Transverse colon (tissue), 4 donors: ENCODE measurements at regions of chr22 and their contacts with region 1.

Region 1: DNA sequence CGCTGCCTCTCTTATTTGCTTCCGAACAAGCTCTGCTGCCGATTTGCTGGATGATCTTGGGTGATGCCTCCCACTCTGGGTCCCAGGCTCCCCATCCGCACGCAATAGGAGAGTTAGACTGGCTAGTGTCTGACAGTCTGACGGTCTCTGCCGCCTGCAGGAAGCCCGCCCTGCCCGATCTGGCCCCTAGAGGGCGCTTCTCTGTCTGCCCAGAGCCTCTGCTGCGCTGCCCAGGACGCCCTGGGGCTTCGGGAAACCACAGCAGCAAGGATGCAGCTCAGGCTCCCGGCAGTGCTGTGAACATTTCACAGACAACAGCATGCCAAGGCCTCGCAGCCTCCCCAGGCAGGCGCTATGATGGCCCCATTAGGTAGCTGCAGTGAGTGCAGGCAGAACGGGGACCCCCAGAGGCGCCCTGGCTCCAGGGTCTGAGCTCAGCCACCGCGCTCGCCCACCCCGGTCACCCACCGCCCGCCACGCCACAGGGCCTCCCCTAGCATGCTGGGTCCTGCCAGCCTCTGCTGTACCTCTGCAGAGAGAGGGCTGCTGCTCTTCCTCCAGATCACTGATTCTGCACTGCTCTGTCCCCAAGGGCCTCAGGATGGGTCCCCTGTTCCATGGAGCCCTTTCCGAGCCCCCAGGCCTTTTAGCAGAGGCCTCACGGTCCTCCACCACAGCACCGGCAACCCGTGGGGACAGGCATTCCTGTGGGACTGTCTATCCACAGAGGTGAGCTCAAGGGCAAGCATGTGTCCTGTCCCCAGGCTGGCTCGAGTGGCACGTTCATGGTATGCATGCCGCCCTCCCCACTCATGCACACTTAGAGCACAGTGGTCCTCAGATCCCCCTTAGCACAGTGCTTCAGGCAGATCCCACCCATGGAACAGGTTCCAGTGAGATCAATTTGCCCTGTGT is 4.3 kb upstream of the BAIAP2L2 start:
- DNase-seq: peak; percentile 90
- H3K4me3 ChIP-seq: no peak overlapping the region
- H3K27ac ChIP-seq: no peak overlapping the region
- H3K4me1 ChIP-seq: peaks cover 4 to 30% (median 21%) of the 10 kb centered on the region in 4 donors
- H3K27me3 ChIP-seq: no peaks in the 10 kb centered on the region
- CTCF ChIP-seq: peak; percentile 86 to 95 (median 93)
- EP300 ChIP-seq: no peak
- POLR2A ChIP-seq: no peak

Region 2: DNA sequence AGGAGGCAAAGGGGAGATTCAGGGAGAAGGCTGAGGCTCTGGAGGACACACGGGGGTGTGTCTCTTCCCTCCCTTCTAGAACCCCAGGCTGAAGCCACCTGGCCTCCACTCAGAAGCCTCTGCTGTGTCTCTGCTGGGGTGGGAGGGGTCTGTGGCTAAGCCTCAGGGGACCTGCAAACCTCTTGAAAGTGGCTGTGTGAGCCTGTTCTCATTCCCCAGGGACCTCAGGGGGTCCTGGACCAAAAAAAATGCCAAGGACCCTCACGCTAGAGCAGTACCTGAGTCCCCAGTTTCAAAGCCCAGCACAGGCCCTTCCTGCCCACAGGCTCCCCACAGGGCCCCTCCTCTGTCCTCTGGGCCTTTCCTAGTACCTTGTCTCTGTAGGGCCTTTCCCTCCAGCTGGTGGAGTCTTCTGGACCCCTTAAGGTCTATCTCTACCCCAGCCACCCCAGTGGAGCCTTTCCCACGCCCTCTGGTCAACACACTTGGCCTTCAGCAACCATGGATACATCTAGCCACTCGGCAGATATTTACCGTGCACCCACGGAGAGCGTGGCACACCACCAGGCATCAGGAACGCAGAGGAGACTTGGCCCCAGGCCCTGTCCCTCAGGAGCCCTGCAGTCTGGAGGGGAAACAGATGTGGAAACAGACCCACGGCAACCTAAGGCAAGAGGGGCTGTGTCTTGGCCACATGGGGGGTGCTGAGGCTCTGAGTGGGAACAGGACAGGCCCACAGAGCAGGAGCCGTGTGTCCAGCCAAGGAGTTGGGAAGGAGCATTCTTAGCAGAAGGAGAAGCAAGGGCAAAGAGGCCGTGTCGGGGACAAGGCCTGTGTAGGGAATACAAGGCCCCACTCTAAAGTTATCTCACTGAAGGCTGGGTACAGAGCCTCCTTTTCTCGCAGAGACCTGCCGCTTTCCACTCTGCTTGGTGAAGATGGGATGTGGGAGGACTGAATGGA is 48.4 kb after region 1 on chr22:
- in situ Hi-C with region 1: no loop called
- intact Hi-C with region 1: no loop called
- DNase-seq: no peak
- H3K4me3 ChIP-seq: no peak overlapping the region
- H3K27ac ChIP-seq: no peak overlapping the region
- H3K4me1 ChIP-seq: peaks cover 0 to 8% (median 1%) of the 10 kb centered on the region in 4 donors
- H3K27me3 ChIP-seq: no peaks in the 10 kb centered on the region
- CTCF ChIP-seq: no peak
- EP300 ChIP-seq: no peak
- POLR2A ChIP-seq: no peak

Region 3: GRCh38 chr22:38230108-38230825 is 115.5 kb after region 1 on chr22:
- in situ Hi-C with region 1: loop called in 1 of 4 experiments (anchors 25 kb)
- intact Hi-C with region 1: loop called (anchors 10 kb)
- DNase-seq: peak; percentile 80
- H3K4me3 ChIP-seq: no peak overlapping the region
- H3K27ac ChIP-seq: peak overlapping the region; percentile 37 to 77 (median 70)
- H3K4me1 ChIP-seq: peaks cover 14 to 28% (median 25%) of the 10 kb centered on the region in 4 donors
- H3K27me3 ChIP-seq: no peaks in the 10 kb centered on the region
- CTCF ChIP-seq: peak; percentile 34 to 83 (median 50)
- EP300 ChIP-seq: no peak
- POLR2A ChIP-seq: no peak

Region 4: DNA sequence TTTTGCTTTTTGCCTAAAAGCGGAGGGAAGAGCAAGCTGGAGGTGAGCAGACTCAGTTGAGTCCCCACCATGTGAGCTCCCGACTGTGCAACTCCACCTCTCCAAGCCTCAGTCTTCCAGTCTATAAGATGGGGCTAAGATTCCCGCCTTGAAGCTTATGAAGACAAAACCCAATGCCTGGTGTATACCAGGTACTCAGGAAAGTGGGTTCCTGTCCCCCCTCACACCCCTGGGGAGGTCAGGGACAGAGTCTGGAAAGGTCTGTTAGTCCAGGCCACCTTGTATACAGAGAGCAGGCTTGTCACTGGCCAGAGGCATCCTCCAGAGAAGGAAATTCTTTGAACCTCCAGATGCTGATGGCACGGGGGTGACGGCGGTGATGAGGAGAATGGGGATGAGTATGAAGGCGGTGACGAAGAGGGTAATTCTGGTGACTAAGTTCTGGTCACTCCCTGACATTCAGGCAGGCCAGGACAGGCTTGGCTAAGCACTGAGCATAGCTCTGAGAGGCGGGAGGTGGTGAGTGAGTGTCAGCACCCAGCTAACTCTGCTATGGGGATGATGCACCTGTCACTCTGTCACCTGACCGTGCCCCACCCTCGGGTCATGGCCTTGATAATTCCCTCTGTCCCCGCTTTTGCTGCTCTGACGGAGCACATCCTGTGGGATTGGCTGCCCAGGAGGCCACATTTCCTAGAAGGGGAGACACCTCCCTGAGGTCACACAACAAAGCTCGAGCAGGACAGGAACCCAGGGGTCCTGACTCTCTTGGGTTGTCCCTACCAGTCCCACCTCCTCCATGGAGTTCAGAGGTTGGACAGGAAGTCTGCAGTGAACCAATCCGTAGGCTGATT is 233.4 kb after region 1 on chr22:
- in situ Hi-C with region 1: loop called in 3 of 4 experiments (anchors 25 kb)
- intact Hi-C with region 1: loop called (anchors 5 kb)
- DNase-seq: peak; percentile 32
- H3K4me3 ChIP-seq: no peak overlapping the region
- H3K27ac ChIP-seq: no peak overlapping the region
- H3K4me1 ChIP-seq: peaks cover 0 to 4% (median 2%) of the 10 kb centered on the region in 4 donors
- H3K27me3 ChIP-seq: peaks cover 7% of the 10 kb centered on the region
- CTCF ChIP-seq: no peak
- EP300 ChIP-seq: no peak
- POLR2A ChIP-seq: no peak

Region 5: GRCh38 chr22:38353142-38353629 is 238.4 kb after region 1 on chr22:
- in situ Hi-C with region 1: loop called in 3 of 4 experiments (anchors 25 kb)
- intact Hi-C with region 1: loop called (anchors 5 kb)
- DNase-seq: peak; percentile 77
- H3K4me3 ChIP-seq: no peak overlapping the region
- H3K27ac ChIP-seq: no peak overlapping the region
- H3K4me1 ChIP-seq: peaks cover 0 to 8% (median 5%) of the 10 kb centered on the region in 4 donors
- H3K27me3 ChIP-seq: no peaks in the 10 kb centered on the region
- CTCF ChIP-seq: peak; percentile 94 to 99 (median 99)
- EP300 ChIP-seq: no peak
- POLR2A ChIP-seq: no peak